H1 (cell line): ENCODE measurements at regions of chr10 and their contacts with region 1.

Region 1: DNA sequence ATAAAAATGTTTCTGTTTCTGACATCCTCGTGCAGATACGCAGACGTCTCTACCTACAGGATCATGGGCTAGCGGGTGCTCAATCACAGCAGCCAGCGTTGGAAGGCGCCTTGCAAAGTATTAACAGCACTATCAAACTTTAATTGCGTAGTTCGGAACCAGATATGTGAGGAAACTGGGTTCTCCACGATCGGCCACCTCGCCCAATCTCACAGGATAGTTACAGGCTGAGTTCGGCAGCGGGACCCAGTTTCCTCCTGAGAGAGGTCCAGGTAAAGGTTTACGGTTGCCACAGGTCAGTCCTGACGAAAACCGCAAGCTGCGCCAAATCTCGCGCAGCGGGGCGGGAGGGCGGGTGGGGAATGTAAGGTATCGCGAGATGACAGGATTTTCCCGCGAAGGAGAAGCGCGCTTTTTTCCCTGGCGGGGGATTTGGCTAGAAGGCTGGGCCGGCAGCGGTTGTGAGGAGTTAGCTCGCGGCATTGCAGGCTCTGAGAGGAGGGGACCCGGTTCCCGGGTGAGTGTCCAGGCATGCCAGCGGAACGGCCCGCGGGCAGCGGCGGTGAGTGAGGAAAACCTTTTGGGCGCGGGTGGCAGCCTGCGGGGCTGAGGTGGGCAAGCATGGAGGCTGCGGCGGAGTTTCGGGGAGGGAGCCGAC is at the start of gene HELLS:
- DNase-seq: peak; percentile 67 to 89
- H3K4me3 ChIP-seq: peak within 1 kb of the TSS; percentile 97 to 100 (median 98)
- H3K27ac ChIP-seq: peak within 1 kb of the TSS; percentile 95
- H3K4me1 ChIP-seq: peaks cover 0 to 11% (median 4%) of the 10 kb centered on the region in 4 experiments; a peak in 5 of 7 replicates
- H3K27me3 ChIP-seq: no peaks in the 10 kb centered on the region
- CTCF ChIP-seq: no peak
- EP300 ChIP-seq: no peak
- POLR2A ChIP-seq: peak; percentile 91 to 92; a peak in 2 of 3 replicates
- RAD21 ChIP-seq: no peak
- total RNA-seq, gene HELLS: 353 and 371 TPM in 2 replicates

Region 2: GRCh38 chr10:94443047-94443446 is 102.5 kb before region 1 on chr10:
- CTCF ChIA-PET with region 1: no interaction called
- POLR2A ChIA-PET with region 1: no interaction called
- DNase-seq: no peak
- H3K4me3 ChIP-seq: no peak overlapping the region
- H3K27ac ChIP-seq: no peak overlapping the region
- H3K4me1 ChIP-seq: no peaks in the 10 kb centered on the region
- H3K27me3 ChIP-seq: no peaks in the 10 kb centered on the region
- CTCF ChIP-seq: no peak
- EP300 ChIP-seq: no peak
- POLR2A ChIP-seq: no peak
- RAD21 ChIP-seq: no peak

Region 3: DNA sequence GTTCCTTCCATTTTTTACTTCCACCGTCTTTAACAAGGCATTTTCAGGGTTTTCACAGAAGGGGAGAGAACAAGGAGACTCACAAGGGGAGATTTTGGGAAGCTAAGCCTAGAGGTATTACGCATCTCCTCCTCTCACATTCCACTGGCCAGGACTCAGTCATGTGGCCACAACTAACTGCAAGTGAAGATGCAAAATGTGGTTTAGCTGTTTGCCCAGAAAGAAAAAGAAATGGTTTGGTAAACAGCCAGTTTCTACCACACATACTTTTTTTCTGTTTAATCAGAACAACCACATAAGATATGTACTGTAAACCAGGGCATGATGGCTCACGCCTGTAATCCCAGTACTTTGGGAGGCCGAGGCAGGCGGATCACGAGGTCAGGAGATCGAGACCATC is 21.4 kb before region 1 on chr10:
- CTCF ChIA-PET with region 1: no interaction called
- POLR2A ChIA-PET with region 1: interaction called, 13 read pairs
- DNase-seq: no peak
- H3K4me3 ChIP-seq: no peak overlapping the region
- H3K27ac ChIP-seq: no peak overlapping the region
- H3K4me1 ChIP-seq: no peaks in the 10 kb centered on the region
- H3K27me3 ChIP-seq: no peaks in the 10 kb centered on the region
- CTCF ChIP-seq: no peak
- EP300 ChIP-seq: no peak
- POLR2A ChIP-seq: no peak
- RAD21 ChIP-seq: no peak